Common myeloid progenitor, CD34-positive (primary cell): ENCODE measurements at regions of chr6 and their contacts with region 1.

Region 1: GRCh38 chr6:13328076-13328874 is at the start of gene TBC1D7:
- DNase-seq: peak; percentile 89 to 95 (median 94)
- H3K4me3 ChIP-seq: peak within 1 kb of the TSS; percentile 88 to 99 (median 93)
- H3K27ac ChIP-seq: peak within 1 kb of the TSS; percentile 86 to 90
- H3K4me1 ChIP-seq: peaks cover 5 to 22% (median 15%) of the 10 kb centered on the region in 4 experiments
- H3K27me3 ChIP-seq: no peaks in the 10 kb centered on the region

Region 2: DNA sequence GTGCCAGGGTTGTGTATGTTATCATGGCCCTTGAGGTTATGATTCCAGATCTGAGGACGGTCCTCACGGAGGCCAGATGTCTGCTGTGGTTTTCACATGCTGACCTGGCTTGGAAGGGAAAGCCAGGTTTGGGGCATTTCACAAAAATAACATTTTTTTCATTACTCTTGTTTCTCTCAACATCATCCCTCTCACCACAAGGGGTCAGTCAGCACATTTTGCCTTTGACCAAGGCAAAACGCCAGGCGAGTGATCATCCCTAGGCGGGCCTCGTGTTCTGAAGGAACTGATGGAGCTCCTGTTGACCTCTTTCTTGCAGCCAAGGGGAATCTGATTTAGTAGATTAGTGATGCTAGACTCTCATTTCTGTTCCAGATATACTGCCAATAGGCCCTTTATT is 133.4 kb before region 1 on chr6:
- CTCF ChIA-PET with region 1: interaction called, 11 read pairs
- POLR2A ChIA-PET with region 1: interaction called, 4 read pairs
- DNase-seq: peak; percentile 60 to 64 (median 63)
- H3K4me3 ChIP-seq: no peak overlapping the region
- H3K27ac ChIP-seq: no peak overlapping the region
- H3K4me1 ChIP-seq: peaks cover 0 to 14% (median 5%) of the 10 kb centered on the region in 4 experiments
- H3K27me3 ChIP-seq: no peaks in the 10 kb centered on the region

Region 3: DNA sequence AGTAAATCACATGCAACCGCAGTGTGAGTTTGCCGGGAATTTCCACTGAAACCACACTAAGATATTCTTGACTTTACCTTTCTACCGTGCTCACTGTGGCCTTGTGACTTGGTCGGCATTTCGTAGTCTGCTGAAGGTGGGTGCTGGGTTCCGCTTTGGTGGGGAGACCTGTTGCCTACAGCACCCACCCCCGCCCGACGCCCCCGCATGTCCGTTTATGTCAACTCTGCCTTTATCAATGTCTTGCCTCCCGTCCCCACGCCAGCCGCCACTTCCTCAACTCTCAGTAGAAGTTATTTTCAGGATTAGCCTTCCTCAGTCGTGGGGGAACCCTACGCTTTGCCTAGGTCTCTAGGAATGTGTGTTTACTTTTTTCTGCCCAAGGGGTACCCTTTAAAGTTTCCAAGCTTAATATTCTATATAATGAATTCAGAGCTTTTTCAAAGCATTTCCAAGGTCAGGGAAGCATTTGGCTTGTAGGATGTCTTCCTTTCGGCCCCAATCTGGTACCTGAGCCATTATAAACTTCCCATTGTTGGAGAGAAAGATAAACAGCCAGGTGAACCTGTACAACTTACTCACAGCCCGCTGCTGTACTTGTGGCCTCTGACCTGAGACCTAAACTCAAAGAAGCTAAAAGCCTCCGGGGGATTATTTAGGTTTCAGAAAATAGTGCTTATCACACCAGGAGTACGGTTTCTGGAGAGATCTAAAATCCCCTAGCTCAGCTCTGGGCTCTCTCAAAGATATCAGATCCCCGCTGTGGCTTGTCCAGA is 54.2 kb before region 1 on chr6:
- CTCF ChIA-PET with region 1: interaction called, 12 read pairs
- POLR2A ChIA-PET with region 1: interaction called, 5 read pairs
- DNase-seq: peak; percentile 85 to 96 (median 94)
- H3K4me3 ChIP-seq: peak overlapping the region in 6 of 7 experiments; percentile 71 to 94 (median 80)
- H3K27ac ChIP-seq: peak overlapping the region; percentile 92 to 95
- H3K4me1 ChIP-seq: peaks cover 16 to 75% (median 57%) of the 10 kb centered on the region in 4 experiments
- H3K27me3 ChIP-seq: no peaks in the 10 kb centered on the region

Region 4: DNA sequence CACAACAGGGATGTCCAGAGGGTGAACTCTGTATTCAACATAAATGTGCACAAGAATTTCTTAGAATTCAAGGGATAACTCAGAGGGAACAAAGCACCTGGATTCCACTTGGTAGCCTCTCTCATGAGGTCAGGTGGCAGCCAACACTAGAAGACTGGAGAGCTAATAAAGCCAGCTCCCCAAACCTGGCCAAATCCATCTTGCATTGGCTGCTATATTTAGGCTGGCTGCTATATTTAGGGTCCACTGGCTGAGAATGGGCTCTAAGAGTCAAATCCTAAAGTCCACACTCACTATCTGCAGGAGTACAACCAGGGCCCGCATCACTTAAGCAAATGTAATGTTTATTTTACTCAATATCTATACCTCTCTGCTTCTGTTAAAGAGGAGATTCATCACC is 19.9 kb before region 1 on chr6:
- CTCF ChIA-PET with region 1: interaction called, 16 read pairs
- POLR2A ChIA-PET with region 1: interaction called, 6 read pairs
- DNase-seq: no peak
- H3K4me3 ChIP-seq: no peak overlapping the region
- H3K27ac ChIP-seq: peak overlapping the region in 1 of 2 experiments; percentile 29
- H3K4me1 ChIP-seq: peaks cover 2 to 25% (median 17%) of the 10 kb centered on the region in 4 experiments
- H3K27me3 ChIP-seq: no peaks in the 10 kb centered on the region